ENCODE measurements at regions of chr3 and their contacts with region 1.

Region 1: DNA sequence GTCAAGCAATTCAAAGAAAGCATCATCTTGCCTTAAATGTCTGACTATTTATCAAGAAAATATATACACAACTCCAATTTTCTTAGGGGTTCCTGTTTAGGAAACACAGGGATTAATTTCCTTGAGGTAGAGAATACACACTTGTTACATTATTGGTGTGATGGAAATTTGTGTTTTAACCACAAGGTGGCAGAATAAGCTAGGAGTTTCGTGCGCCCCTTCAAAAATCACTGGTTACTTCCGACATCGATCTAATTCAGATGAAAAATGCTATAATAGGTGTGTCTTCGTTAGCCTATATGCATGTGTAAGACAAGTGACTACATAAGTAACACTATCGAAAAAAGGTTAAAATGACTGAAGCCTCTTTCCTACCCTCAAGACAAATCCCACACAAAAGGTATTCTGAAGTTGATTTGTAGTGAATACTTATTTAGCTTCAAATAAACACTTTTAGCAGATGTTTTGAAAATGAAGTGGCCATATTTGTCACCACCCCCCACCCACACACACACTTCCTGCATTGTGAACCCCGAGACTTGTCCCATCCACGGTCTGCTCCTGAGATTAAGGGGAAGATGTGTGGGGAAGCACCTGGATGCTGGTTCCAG is 246.5 kb downstream of the ROBO1 start:
- DNase-seq: no peak
- ATAC-seq: no peak
- H3K4me3 ChIP-seq: no peak overlapping the region
- H3K27ac ChIP-seq: no peak overlapping the region
- H3K4me1 ChIP-seq: no peaks in the 10 kb centered on the region
- H3K27me3 ChIP-seq: no peaks in the 10 kb centered on the region
- CTCF ChIP-seq: peak; percentile 49

Region 2: DNA sequence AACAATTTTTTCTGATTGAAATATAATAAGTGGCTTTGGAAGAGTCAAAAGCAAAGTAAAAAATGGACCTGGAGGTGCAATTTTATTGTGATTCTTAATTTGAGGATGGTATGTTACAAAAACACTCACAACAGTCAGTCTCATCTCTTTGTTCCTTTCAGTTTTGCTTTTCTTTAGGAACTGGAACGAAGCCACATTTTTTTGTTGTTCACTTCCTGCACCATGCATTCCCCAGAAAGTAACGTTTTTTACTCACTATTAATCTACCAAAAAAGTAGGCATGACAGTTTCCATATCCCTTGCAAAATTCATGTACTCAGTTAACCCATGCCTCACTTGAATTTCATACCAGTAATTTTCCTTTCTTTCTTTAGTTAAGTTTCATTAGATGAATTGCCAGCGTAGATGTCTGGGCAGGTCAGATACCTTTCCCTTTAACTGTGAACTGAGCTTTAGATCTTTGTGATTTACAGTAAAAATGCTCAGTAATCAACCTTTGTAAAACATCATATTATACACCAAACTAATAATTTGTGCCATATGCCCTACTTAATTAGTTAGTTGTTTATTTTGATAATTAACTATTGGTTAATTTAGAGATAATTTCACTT is 137.8 kb before region 1 on chr3:
- intact Hi-C with region 1: no loop called
- DNase-seq: no peak
- ATAC-seq: no peak
- H3K4me3 ChIP-seq: no peak overlapping the region
- H3K27ac ChIP-seq: no peak overlapping the region
- H3K4me1 ChIP-seq: no peaks in the 10 kb centered on the region
- H3K27me3 ChIP-seq: no peaks in the 10 kb centered on the region
- CTCF ChIP-seq: no peak

Region 3: GRCh38 chr3:79846148-79846933 is 325.0 kb after region 1 on chr3:
- intact Hi-C with region 1: loop called (anchors 10 kb)
- DNase-seq: no peak
- ATAC-seq: no peak
- H3K4me3 ChIP-seq: no peak overlapping the region
- H3K27ac ChIP-seq: no peak overlapping the region
- H3K4me1 ChIP-seq: no peaks in the 10 kb centered on the region
- H3K27me3 ChIP-seq: no peaks in the 10 kb centered on the region
- CTCF ChIP-seq: peak; percentile 22